MCF 10A (cell line): ENCODE measurements at regions of chr12 and their contacts with region 1.

Region 1: GRCh38 chr12:70576346-70577282 is 60.6 kb downstream of the PTPRB start:
- DNase-seq: peak; percentile 81
- H3K4me3 Mint-ChIP-seq: no peak overlapping the region
- H3K27ac Mint-ChIP-seq: no peak overlapping the region
- H3K4me1 Mint-ChIP-seq: no peaks in the 10 kb centered on the region
- H3K27me3 Mint-ChIP-seq: no peaks in the 10 kb centered on the region
- CTCF ChIP-seq: peak; percentile 76

Region 2: GRCh38 chr12:69359531-69360347 is 1216.9 kb before region 1 on chr12 and contains the start of gene YEATS4:
- CTCF ChIA-PET with region 1: no interaction called
- POLR2A ChIA-PET with region 1: no interaction called
- intact Hi-C with region 1: loop called (anchors 5 kb)
- DNase-seq: peak; percentile 95
- H3K4me3 Mint-ChIP-seq: peak within 1 kb of the TSS; percentile 83
- H3K27ac Mint-ChIP-seq: peak within 1 kb of the TSS; percentile 84
- H3K4me1 Mint-ChIP-seq: peaks cover 15% of the 10 kb centered on the region
- H3K27me3 Mint-ChIP-seq: peaks cover 6% of the 10 kb centered on the region
- CTCF ChIP-seq: no peak
- total RNA-seq, gene YEATS4: 26.1 and 30.9 TPM in 2 replicates

Region 3: DNA sequence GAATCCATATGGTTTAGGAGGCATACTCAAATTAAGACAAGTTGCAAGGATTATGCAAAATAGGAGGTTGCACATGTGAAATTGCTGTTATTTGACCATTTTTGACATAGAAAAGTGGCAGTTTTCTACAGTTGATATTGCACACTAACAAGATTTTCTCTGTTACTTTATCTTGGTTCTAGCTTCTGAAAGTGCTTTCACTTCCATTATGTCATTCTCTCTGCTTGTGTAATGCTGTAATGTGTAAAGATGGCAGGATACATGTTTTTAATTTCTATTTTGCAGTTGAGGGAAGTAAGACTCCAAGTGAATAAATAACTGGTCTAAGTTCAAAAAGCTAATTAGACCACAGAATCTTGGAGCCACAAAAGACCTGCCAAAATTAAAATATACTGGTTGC is 691.0 kb before region 1 on chr12:
- CTCF ChIA-PET with region 1: interaction called, 79 read pairs
- POLR2A ChIA-PET with region 1: no interaction called
- intact Hi-C with region 1: no loop called
- DNase-seq: no peak
- H3K4me3 Mint-ChIP-seq: no peak overlapping the region
- H3K27ac Mint-ChIP-seq: no peak overlapping the region
- H3K4me1 Mint-ChIP-seq: no peaks in the 10 kb centered on the region
- H3K27me3 Mint-ChIP-seq: no peaks in the 10 kb centered on the region
- CTCF ChIP-seq: no peak

Region 4: GRCh38 chr12:70242695-70243509 is 333.7 kb before region 1 on chr12 and contains the start of gene CNOT2:
- CTCF ChIA-PET with region 1: no interaction called
- POLR2A ChIA-PET with region 1: no interaction called
- intact Hi-C with region 1: loop called (anchors 2 kb)
- DNase-seq: peak; percentile 92
- H3K4me3 Mint-ChIP-seq: peak within 1 kb of the TSS; percentile 95
- H3K27ac Mint-ChIP-seq: peak within 1 kb of the TSS; percentile 93
- H3K4me1 Mint-ChIP-seq: peaks cover 39% of the 10 kb centered on the region
- H3K27me3 Mint-ChIP-seq: no peaks in the 10 kb centered on the region
- CTCF ChIP-seq: no peak
- total RNA-seq, gene CNOT2: 88.3 and 91.0 TPM in 2 replicates

Region 5: DNA sequence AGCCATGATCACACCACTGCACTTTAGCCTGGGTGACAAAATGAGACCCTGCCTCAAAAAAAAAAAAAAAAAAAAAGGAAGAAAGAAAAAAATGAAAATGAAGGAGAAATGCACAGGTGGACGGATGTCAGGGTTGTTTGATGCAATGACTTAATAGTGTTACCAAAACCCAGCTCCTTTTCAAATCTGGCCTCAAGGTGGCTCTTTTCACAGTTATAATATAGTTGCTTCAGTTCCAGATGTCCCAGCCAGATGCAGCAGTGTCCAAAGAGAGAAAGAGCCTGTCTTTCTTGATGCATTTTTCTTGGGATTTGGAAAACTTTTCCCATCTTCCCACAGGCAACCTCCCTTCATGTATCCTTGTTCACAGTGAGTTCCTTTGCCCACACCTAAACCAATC is 174.0 kb before region 1 on chr12:
- CTCF ChIA-PET with region 1: interaction called, 5 read pairs
- POLR2A ChIA-PET with region 1: no interaction called
- intact Hi-C with region 1: loop called (anchors 2 kb)
- DNase-seq: peak; percentile 15
- H3K4me3 Mint-ChIP-seq: no peak overlapping the region
- H3K27ac Mint-ChIP-seq: no peak overlapping the region
- H3K4me1 Mint-ChIP-seq: no peaks in the 10 kb centered on the region
- H3K27me3 Mint-ChIP-seq: peaks cover 11% of the 10 kb centered on the region
- CTCF ChIP-seq: no peak